IMR-90 (cell line): ENCODE measurements at regions of chr7 and their contacts with region 1.

Region 1: GRCh38 chr7:134632937-134633540 is 13.6 kb upstream of the BPGM start:
- DNase-seq: peak; percentile 69
- ATAC-seq: peak; percentile 67; the same call in 1 of the 2 replicates
- H3K4me3 ChIP-seq: no peak overlapping the region
- H3K27ac ChIP-seq: no peak overlapping the region
- H3K4me1 ChIP-seq: peaks cover 8% of the 10 kb centered on the region
- H3K27me3 ChIP-seq: no peaks in the 10 kb centered on the region
- CTCF ChIP-seq: peak; percentile 75
- POLR2A ChIP-seq: no peak
- RAD21 ChIP-seq: peak; percentile 87

Region 2: DNA sequence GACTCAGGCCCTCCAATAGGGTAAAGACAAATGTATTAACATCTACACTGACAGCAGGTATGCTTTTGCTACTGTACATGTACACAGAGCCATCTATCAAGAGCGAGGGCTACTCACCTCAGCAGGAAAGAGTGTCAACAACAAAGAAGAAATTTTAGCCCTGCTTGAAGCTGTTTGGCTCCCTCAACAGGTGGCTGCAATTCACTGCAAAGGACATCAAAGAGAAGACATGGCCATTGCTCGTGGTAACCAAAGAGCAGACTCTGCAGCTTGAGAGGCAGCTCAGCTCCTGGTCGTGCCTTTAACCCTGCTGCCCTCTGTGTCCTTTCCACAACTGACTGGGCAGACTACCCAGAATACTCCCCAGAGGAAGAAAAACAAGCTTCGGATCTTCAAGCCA is 79.1 kb before region 1 on chr7:
- CTCF ChIA-PET with region 1: no interaction called
- POLR2A ChIA-PET with region 1: no interaction called
- dilution Hi-C with region 1: no loop called
- in situ Hi-C with region 1: no loop called
- intact Hi-C with region 1: no loop called
- DNase-seq: peak; percentile 5
- ATAC-seq: no peak
- H3K4me3 ChIP-seq: no peak overlapping the region
- H3K27ac ChIP-seq: no peak overlapping the region
- H3K4me1 ChIP-seq: no peaks in the 10 kb centered on the region
- H3K27me3 ChIP-seq: peaks cover 47% of the 10 kb centered on the region
- CTCF ChIP-seq: no peak
- POLR2A ChIP-seq: no peak
- RAD21 ChIP-seq: no peak

Region 3: GRCh38 chr7:134669845-134670373 is 36.9 kb after region 1 on chr7:
- CTCF ChIA-PET with region 1: no interaction called
- POLR2A ChIA-PET with region 1: no interaction called
- dilution Hi-C with region 1: no loop called
- in situ Hi-C with region 1: no loop called
- intact Hi-C with region 1: loop called (anchors 5 kb)
- DNase-seq: peak; percentile 96
- ATAC-seq: peak; percentile 83
- H3K4me3 ChIP-seq: no peak overlapping the region
- H3K27ac ChIP-seq: no peak overlapping the region
- H3K4me1 ChIP-seq: peaks cover 12% of the 10 kb centered on the region
- H3K27me3 ChIP-seq: no peaks in the 10 kb centered on the region
- CTCF ChIP-seq: no peak
- POLR2A ChIP-seq: 0 out of 2 replicates have a peak, but pooled peaks have one; percentile 29
- RAD21 ChIP-seq: no peak

Region 4: GRCh38 chr7:134755401-134756022 is 122.5 kb after region 1 on chr7:
- CTCF ChIA-PET with region 1: no interaction called
- POLR2A ChIA-PET with region 1: no interaction called
- dilution Hi-C with region 1: no loop called
- in situ Hi-C with region 1: no loop called
- intact Hi-C with region 1: loop called (anchors 5 kb)
- DNase-seq: no peak
- ATAC-seq: peak; percentile 78
- H3K4me3 ChIP-seq: no peak overlapping the region
- H3K27ac ChIP-seq: no peak overlapping the region
- H3K4me1 ChIP-seq: peaks cover 5% of the 10 kb centered on the region; the same call in 1 of the 2 replicates
- H3K27me3 ChIP-seq: no peaks in the 10 kb centered on the region
- CTCF ChIP-seq: peak; percentile 68
- POLR2A ChIP-seq: no peak
- RAD21 ChIP-seq: peak; percentile 63

Region 5: GRCh38 chr7:134954197-134955082 is 321.4 kb after region 1 on chr7:
- CTCF ChIA-PET with region 1: no interaction called
- POLR2A ChIA-PET with region 1: no interaction called
- dilution Hi-C with region 1: no loop called
- in situ Hi-C with region 1: no loop called
- intact Hi-C with region 1: loop called (anchors 5 kb)
- DNase-seq: peak; percentile 54
- ATAC-seq: peak; percentile 60
- H3K4me3 ChIP-seq: no peak overlapping the region
- H3K27ac ChIP-seq: peak overlapping the region; percentile 7; the same call in 1 of the 2 replicates
- H3K4me1 ChIP-seq: no peaks in the 10 kb centered on the region
- H3K27me3 ChIP-seq: no peaks in the 10 kb centered on the region
- CTCF ChIP-seq: peak; percentile 55
- POLR2A ChIP-seq: no peak
- RAD21 ChIP-seq: peak; percentile 58

Region 6: GRCh38 chr7:135170274-135170997 is 537.4 kb after region 1 on chr7 and contains the start of gene CYREN:
- CTCF ChIA-PET with region 1: no interaction called
- POLR2A ChIA-PET with region 1: no interaction called
- dilution Hi-C with region 1: no loop called
- in situ Hi-C with region 1: no loop called
- intact Hi-C with region 1: loop called (anchors 1 kb)
- DNase-seq: peak; percentile 93
- ATAC-seq: peak; percentile 94
- H3K4me3 ChIP-seq: peak within 1 kb of the TSS; percentile 91
- H3K27ac ChIP-seq: peak within 1 kb of the TSS; percentile 96
- H3K4me1 ChIP-seq: peaks cover 12% of the 10 kb centered on the region
- H3K27me3 ChIP-seq: no peaks in the 10 kb centered on the region
- CTCF ChIP-seq: peak; percentile 83
- POLR2A ChIP-seq: peak; percentile 75
- RAD21 ChIP-seq: peak; percentile 75
- total RNA-seq, gene CYREN: 26.5 and 33.1 TPM in 2 replicates